Tibial artery (tissue), 4 donors: ENCODE measurements at regions of chr2 and their contacts with region 1.

Region 1: DNA sequence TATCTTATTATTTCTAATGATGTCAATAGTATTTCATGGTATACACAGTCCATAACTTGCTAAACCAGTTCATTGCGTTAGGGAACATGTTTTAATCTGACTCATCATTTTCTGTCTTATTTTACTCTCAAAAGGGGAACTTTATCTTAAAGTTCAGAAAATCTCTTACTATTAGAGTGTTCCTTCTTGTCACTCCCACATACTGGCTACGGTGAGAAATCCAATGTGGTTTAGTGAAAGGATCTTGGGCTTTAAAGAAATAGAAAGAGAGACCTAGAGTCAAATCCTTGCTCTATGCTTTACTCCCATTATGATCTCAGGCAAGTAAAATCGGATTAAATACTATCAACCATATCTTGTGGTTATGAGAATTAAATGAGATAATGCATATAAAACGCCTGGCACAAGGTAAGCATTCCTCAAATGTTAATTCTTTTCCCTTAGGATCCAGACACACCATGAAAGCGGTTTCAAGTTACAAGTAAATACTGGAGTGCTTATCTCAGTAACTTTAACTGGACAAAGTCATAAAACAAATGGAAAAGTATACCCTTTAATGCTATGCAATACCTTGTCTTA is 576.0 kb downstream of the ARHGAP15 start:
- DNase-seq: no peak
- H3K4me3 ChIP-seq: no peak overlapping the region
- H3K27ac ChIP-seq: peak overlapping the region in 1 of 2 donors; percentile 11
- H3K4me1 ChIP-seq: peaks cover 0 to 67% (median 21%) of the 10 kb centered on the region in 4 donors
- H3K27me3 ChIP-seq: no peaks in the 10 kb centered on the region
- CTCF ChIP-seq: no peak

Region 2: DNA sequence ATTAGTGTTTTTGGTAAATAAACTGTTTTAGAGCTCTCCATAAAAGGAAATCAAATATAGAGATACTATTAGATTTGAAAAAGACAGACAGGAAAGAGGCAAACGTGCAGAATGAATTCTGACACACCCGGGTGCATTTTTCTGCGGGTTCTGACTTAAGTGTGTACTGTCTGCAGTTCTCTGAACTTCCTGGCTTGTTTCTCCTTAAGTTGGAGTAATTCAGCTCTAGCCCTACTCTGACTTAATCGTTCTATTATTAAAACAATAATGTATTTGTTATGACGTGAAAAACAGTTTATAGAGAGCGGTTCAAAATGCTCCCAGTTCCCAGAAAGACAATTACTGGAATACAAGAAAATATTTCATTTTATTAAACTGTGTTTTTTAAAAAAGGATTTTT is 270.1 kb before region 1 on chr2:
- intact Hi-C with region 1: loop called (anchors 5 kb)
- DNase-seq: no peak
- H3K4me3 ChIP-seq: peak overlapping the region in 1 of 2 donors; percentile 16
- H3K27ac ChIP-seq: peak overlapping the region; percentile 21 to 25
- H3K4me1 ChIP-seq: peaks cover 0 to 44% (median 0%) of the 10 kb centered on the region in 4 donors
- H3K27me3 ChIP-seq: no peaks in the 10 kb centered on the region
- CTCF ChIP-seq: no peak